Calu3 (cell line): ENCODE measurements at regions of chr6 and their contacts with region 1.

Region 1: GRCh38 chr6:26270903-26271667 is 93.9 kb upstream of the BTN3A2 start:
- DNase-seq: peak; percentile 85
- H3K4me3 Mint-ChIP-seq: no peak overlapping the region
- H3K27ac Mint-ChIP-seq: no peak overlapping the region
- H3K4me1 Mint-ChIP-seq: peaks cover 20% of the 10 kb centered on the region
- H3K27me3 Mint-ChIP-seq: no peaks in the 10 kb centered on the region
- CTCF ChIP-seq: no peak

Region 2: DNA sequence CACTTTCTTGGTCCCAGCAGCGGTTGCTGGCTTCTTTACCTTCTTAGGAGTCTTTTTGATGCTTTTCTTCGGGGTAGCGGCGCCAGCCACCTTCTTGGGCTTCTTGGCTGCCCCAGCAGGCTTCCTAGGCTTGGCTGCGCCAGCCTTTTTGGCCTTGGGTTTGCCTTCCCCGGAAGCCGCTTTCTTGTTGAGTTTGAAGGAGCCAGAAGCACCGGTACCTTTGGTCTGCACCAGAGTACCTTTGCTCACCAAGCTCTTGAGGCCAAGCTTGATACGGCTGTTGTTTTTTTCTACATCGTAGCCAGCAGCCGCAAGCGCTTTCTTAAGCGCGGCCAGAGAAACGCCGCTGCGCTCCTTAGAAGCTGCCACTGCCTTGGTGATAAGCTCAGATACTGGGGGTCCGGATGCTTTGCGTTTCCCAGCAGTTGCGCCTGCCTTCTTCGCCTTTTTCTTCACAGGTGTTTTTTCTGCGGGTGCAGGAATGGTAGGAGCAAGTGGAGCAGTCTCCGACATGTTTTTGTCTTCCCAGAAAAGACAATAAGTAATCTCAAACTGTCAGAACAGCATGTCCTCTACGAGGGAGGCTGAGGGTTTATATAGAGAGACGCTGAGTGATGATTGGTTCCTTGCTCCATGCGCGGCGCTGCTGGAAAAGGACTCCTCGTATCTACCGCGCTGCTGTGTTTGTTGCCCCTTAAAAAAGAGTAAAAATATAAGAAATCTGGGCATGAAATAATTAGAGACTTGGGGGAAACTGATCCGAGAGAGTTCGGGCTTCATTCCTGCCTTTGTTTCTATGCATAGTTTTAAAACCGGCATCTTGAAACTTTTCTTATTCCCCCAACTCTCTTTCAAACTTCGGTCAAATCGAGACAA is 36.4 kb before region 1 on chr6:
- CTCF ChIA-PET with region 1: interaction called, 5 read pairs
- intact Hi-C with region 1: loop called (anchors 1 kb)
- DNase-seq: peak; percentile 79
- H3K4me3 Mint-ChIP-seq: peak overlapping the region; percentile 66
- H3K27ac Mint-ChIP-seq: peak overlapping the region; percentile 81
- H3K4me1 Mint-ChIP-seq: peaks cover 31% of the 10 kb centered on the region
- H3K27me3 Mint-ChIP-seq: no peaks in the 10 kb centered on the region
- CTCF ChIP-seq: no peak

Region 3: GRCh38 chr6:26249957-26250697 is 21.0 kb before region 1 on chr6:
- CTCF ChIA-PET with region 1: interaction called, 7 read pairs
- intact Hi-C with region 1: loop called (anchors 1 kb)
- DNase-seq: peak; percentile 81
- H3K4me3 Mint-ChIP-seq: peak overlapping the region; percentile 92
- H3K27ac Mint-ChIP-seq: peak overlapping the region; percentile 93
- H3K4me1 Mint-ChIP-seq: peaks cover 18% of the 10 kb centered on the region
- H3K27me3 Mint-ChIP-seq: no peaks in the 10 kb centered on the region
- CTCF ChIP-seq: peak; percentile 35

Region 4: DNA sequence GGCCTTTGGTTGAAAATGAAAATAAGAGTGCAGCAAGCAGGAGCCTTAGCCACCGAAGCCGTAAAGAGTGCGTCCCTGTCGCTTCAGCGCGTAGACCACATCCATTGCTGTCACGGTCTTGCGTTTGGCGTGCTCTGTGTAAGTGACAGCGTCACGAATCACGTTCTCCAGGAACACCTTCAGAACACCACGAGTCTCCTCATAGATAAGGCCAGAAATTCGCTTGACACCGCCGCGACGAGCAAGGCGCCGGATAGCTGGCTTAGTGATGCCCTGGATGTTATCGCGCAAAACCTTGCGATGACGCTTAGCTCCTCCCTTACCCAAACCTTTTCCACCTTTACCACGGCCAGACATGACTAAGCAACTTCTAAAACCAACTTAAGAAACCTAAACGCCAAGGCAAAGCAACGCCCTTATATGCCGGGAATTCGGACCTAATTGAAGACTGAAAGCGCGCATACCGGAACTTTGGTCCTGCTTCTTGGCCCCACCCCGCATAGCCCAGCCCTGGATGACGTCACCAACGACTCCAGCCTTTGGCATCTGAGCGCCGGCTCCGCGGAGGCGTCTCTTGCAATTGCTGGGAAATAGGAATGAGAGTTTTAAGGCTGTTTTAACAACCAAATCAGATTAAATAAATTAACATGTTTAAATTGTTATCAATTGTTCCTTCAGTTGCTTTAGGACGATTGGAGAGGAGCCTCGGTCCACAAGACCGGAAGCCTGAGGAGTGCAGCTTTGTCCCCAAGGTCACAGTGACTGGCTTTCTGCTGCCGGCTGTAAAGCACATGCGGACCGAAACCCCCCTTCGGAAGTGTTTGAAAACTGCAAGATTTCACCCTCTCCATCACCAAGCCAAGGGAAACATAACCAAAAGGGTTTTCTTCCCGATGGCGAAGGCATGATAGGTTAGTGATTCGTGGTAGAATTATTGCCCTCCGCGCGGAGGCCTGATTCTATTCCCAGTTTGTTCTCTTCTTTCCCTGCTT is 14.4 kb after region 1 on chr6:
- CTCF ChIA-PET with region 1: interaction called, 22 read pairs
- intact Hi-C with region 1: loop called (anchors 1 kb)
- DNase-seq: peak; percentile 99
- H3K4me3 Mint-ChIP-seq: peak overlapping the region; percentile 76
- H3K27ac Mint-ChIP-seq: peak overlapping the region; percentile 98
- H3K4me1 Mint-ChIP-seq: peaks cover 35% of the 10 kb centered on the region
- H3K27me3 Mint-ChIP-seq: no peaks in the 10 kb centered on the region
- CTCF ChIP-seq: no peak

Region 5: DNA sequence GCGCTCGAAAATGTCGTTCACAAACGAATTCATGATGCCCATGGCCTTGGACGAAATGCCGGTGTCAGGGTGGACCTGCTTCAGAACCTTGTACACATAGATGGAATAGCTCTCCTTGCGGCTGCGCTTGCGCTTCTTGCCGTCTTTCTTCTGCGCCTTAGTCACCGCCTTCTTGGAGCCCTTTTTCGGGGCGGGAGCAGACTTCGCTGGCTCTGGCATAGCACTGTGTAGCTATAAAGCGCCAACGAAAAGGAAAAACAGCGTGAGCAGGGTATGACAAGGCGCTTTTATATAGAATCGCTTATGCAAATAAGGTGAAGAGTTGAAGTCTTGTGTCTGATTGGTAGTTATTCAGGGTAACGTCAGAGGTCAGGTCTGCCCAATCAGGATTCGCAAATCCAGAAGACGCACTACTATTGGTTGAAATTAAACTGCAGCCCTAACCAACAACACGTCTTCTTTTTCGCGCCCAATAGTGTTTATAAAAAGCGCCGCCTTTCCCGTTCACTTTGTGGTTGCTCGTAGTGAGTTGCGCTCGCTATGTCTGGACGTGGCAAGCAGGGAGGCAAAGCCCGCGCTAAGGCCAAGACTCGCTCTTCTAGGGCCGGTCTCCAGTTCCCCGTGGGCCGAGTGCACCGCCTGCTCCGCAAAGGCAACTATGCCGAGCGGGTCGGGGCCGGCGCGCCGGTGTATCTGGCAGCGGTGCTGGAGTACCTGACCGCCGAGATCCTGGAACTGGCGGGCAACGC is 861.6 kb after region 1 on chr6:
- CTCF ChIA-PET with region 1: no interaction called
- intact Hi-C with region 1: loop called (anchors 5 kb)
- DNase-seq: peak; percentile 92
- H3K4me3 Mint-ChIP-seq: no peak overlapping the region
- H3K27ac Mint-ChIP-seq: no peak overlapping the region
- H3K4me1 Mint-ChIP-seq: no peaks in the 10 kb centered on the region
- H3K27me3 Mint-ChIP-seq: no peaks in the 10 kb centered on the region
- CTCF ChIP-seq: no peak